OCI-LY7 (cell line): ENCODE measurements at regions of chr4 and their contacts with region 1.

Region 1: GRCh38 chr4:52376132-52376704 is 282.9 kb downstream of the USP46 start:
- DNase-seq: peak; percentile 48
- H3K4me3 ChIP-seq: no peak overlapping the region
- H3K27ac ChIP-seq: no peak overlapping the region
- H3K4me1 ChIP-seq: no peaks in the 10 kb centered on the region
- CTCF ChIP-seq: peak; percentile 93

Region 2: DNA sequence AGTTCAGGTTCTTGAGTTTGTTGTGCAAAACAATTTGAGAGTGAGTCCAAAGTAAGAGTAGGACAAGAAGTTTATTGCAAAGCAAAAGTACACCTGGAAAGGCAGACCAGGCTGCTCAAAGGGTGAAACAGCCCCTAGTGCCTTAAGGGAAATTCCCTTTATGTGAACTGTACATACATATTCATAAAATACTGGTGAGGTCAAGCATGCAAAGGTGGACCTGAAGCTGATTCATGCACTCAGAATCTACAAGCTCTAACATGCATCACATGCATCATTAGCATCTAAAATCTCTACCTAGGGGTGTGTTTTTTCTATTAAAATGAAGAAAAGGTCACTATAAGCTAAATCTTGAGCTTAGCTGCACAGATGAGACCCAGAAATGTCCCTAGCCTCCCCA is 58.2 kb before region 1 on chr4:
- CTCF ChIA-PET with region 1: no interaction called
- POLR2A ChIA-PET with region 1: no interaction called
- intact Hi-C with region 1: no loop called
- DNase-seq: no peak
- H3K4me3 ChIP-seq: no peak overlapping the region
- H3K27ac ChIP-seq: no peak overlapping the region
- H3K4me1 ChIP-seq: no peaks in the 10 kb centered on the region
- CTCF ChIP-seq: no peak

Region 3: DNA sequence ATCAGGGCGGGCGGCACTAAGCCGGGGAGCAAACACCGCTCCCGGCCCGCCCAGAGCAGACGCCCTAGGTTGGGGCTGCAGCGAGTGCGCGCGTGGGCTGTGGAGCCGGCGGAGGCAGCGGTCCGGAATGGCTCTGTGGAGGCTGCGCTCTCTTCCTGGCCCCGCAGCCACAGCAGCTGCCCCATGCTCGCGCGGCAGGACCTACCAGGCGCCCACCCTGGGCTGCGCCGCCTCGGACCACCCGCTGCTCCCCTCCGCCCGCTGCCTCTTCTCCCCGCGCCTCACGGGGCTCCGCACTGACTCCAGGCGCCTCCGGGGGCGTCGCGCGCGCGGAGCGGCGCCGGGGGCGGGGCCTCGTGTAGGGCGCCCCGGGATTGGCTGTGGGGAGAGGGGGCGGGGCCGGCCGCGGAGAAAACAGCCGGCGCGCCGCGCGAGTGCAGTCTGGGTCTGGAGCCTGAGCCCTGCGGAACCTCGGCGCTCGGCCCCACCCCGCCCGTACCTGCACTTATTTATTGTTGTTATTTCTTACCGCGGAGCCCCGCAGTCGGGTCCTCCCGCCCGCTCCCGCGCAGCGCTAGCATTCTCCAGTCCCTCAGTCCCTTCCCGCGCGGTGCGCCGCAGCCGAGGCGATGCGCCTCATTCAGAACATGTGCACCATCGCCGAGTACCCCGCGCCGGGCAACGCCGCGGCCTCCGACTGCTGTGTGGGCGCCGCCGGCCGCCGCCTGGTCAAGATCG is 485.8 kb after region 1 on chr4 and contains the start of gene RASL11B:
- CTCF ChIA-PET with region 1: no interaction called
- POLR2A ChIA-PET with region 1: no interaction called
- intact Hi-C with region 1: loop called (anchors 10 kb)
- DNase-seq: no peak
- H3K4me3 ChIP-seq: no peak within 1 kb of the TSS
- H3K27ac ChIP-seq: no peak within 1 kb of the TSS
- H3K4me1 ChIP-seq: no peaks in the 10 kb centered on the region
- CTCF ChIP-seq: no peak
- total RNA-seq, gene RASL11B: 0.10 TPM in 1 of 2 replicates, not detected in the other

Region 4: DNA sequence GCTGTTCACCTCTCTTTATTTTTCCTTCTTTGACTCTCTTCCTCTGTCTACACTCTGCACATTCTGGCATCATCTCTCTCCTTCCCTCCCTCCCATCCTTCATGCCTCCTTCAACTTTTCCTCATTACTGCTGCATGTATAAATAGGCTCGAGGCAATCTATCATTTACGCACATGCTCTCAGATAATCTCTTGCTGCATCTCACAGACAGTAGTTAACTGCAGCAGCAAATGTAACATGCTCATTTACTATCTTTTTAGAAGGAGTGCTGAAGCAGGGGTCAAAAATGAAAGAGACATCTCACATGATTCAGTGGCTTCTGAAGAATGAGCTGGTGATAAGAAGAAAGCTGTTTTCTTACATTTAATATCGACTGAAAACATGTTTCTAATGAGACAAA is 613.6 kb after region 1 on chr4:
- CTCF ChIA-PET with region 1: no interaction called
- POLR2A ChIA-PET with region 1: no interaction called
- intact Hi-C with region 1: no loop called
- DNase-seq: no peak
- H3K4me3 ChIP-seq: no peak overlapping the region
- H3K27ac ChIP-seq: no peak overlapping the region
- H3K4me1 ChIP-seq: no peaks in the 10 kb centered on the region
- CTCF ChIP-seq: no peak